ENCODE measurements at regions of chr9 and their contacts with region 1.

Region 1: DNA sequence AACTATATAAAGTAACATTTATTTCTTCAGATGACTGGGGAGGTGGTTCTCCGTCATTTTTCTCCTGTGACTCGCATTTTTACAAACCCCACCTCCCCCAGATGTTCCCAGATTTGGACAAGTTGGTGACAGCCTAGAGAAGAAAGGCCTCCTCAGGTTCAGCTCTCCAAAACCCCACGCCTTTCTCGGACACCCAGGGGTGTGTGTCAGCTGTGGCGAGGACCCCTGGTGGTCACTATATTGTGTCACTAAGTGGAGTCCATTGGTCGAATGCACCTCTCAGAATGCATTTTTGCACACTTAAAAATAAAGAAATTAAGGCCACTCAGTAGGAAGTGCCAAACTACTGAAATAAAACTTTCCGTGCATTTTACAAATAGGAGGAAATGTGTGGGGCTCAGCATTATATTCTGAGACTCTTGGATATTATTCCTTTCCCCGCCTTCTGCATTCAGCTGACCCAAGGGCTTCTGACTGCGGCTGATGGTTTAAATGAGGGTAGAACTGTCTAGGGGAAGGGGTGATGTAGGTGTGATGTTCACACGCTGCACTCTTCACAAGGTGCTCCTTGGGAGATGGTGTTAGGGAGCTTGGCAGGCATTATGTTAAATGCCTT is 47.6 kb downstream of the ACO1 start:
- DNase-seq: peak; percentile 47 to 68 (median 59)
- H3K4me3 ChIP-seq: no peak overlapping the region
- H3K27ac ChIP-seq: no peak overlapping the region
- H3K4me1 ChIP-seq: peaks cover 0 to 2% (median 0%) of the 10 kb centered on the region in 4 experiments
- H3K27me3 ChIP-seq: no peaks in the 10 kb centered on the region

Region 2: GRCh38 chr9:32384364-32385151 is 47.5 kb before region 1 on chr9 and contains the start of gene ACO1:
- CTCF ChIA-PET with region 1: interaction called, 153 read pairs
- POLR2A ChIA-PET with region 1: no interaction called
- DNase-seq: peak; percentile 79 to 84 (median 81)
- H3K4me3 ChIP-seq: peak within 1 kb of the TSS; percentile 72 to 98 (median 89)
- H3K27ac ChIP-seq: peak within 1 kb of the TSS in 1 of 2 experiments; percentile 43
- H3K4me1 ChIP-seq: peaks cover 3 to 24% (median 14%) of the 10 kb centered on the region in 4 experiments
- H3K27me3 ChIP-seq: peaks cover 4 to 14% (median 9%) of the 10 kb centered on the region in 5 experiments

Region 3: GRCh38 chr9:32398207-32398606 is 33.8 kb before region 1 on chr9:
- CTCF ChIA-PET with region 1: interaction called, 15 read pairs
- POLR2A ChIA-PET with region 1: no interaction called
- DNase-seq: no peak
- H3K4me3 ChIP-seq: no peak overlapping the region
- H3K27ac ChIP-seq: no peak overlapping the region
- H3K4me1 ChIP-seq: no peaks in the 10 kb centered on the region
- H3K27me3 ChIP-seq: no peaks in the 10 kb centered on the region

Region 4: DNA sequence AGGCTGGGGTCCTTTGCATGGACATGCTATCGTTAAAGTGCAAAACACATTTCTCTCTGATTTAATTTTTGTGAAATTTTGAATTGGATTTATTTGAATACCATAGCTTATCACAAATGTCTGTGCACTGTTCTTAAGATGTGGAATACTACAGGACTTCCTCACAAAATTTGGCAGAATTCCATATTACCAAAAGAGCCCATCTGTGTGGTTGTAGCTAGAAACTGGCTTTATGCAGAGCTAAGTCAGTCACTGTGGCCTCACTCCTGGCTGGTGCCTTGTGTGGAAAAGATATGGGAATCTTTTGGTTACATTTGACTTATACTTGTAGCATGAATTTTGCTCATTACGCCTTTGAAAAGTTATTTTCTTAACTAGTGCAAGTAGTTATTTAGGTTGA is 12.1 kb before region 1 on chr9:
- CTCF ChIA-PET with region 1: interaction called, 12 read pairs
- POLR2A ChIA-PET with region 1: no interaction called
- DNase-seq: no peak
- H3K4me3 ChIP-seq: no peak overlapping the region
- H3K27ac ChIP-seq: no peak overlapping the region
- H3K4me1 ChIP-seq: no peaks in the 10 kb centered on the region
- H3K27me3 ChIP-seq: no peaks in the 10 kb centered on the region

Region 5: DNA sequence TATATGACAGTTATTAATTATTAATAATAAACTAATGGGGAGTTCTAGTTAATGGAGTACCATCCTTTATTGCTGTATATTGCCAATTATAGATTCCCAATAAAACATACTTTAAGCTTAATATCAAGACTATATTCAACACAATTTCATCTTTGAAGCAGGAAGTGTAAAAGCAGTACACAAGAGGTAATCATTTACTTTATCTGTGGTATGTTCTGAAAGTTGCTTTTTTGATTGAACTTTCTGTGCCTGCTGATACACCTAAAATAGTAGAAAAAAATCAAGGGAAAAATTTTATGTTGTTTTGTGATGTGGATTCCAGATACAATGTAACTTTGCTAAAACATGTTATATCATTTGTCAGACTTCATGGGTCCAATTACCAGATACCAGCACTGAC is 10.4 kb after region 1 on chr9:
- CTCF ChIA-PET with region 1: interaction called, 11 read pairs
- POLR2A ChIA-PET with region 1: no interaction called
- DNase-seq: no peak
- H3K4me3 ChIP-seq: no peak overlapping the region
- H3K27ac ChIP-seq: no peak overlapping the region
- H3K4me1 ChIP-seq: no peaks in the 10 kb centered on the region
- H3K27me3 ChIP-seq: no peaks in the 10 kb centered on the region

Region 6: DNA sequence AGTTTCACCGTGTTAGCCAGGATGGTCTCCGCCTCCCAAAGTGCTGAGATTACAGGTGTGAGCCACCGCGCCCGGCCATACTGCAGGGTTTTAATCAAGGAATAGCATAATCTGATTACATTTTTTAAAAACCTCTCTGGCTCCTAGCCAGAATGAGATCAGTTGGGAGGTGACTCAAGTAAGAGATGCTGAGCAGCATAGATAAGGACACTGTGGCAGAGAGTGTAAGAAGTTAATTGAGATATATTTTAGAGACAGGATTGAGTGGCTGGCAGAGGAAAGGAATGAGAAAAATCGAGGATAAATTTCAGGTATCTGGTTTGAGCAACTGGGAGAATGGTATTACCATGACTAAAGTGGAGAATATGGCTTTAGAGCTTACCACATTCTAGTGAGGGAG is 101.3 kb after region 1 on chr9:
- CTCF ChIA-PET with region 1: no interaction called
- POLR2A ChIA-PET with region 1: no interaction called
- DNase-seq: peak in 1 of 3 donors; percentile 37
- H3K4me3 ChIP-seq: no peak overlapping the region
- H3K27ac ChIP-seq: no peak overlapping the region
- H3K4me1 ChIP-seq: no peaks in the 10 kb centered on the region
- H3K27me3 ChIP-seq: no peaks in the 10 kb centered on the region